OCI-LY7 (cell line): ENCODE measurements at regions of chr2 and their contacts with region 1.

Region 1: DNA sequence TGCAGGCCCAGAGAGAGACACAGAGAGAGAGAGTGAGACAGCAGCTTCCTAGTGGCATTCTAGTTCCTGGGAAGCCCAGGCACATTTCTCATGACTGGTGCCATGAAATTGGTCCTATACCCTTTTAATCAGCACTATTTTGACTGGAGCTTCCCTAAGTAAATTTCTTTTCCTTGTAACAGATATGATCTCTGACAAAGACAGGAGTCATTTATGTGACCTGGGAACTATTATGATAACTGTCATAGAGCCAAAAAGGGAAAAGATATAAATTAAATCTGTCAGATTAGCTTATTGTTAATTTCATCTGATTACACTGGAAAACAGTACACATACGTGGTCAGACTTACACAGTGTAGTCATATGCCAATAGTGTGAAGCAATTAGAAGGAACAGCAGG is 161.3 kb upstream of the HNRNPA3 start:
- DNase-seq: no peak
- H3K4me3 ChIP-seq: no peak overlapping the region
- H3K27ac ChIP-seq: no peak overlapping the region
- H3K4me1 ChIP-seq: no peaks in the 10 kb centered on the region
- CTCF ChIP-seq: no peak

Region 2: GRCh38 chr2:176601066-176601465 is 450.2 kb before region 1 on chr2:
- CTCF ChIA-PET with region 1: interaction called, 14 read pairs
- POLR2A ChIA-PET with region 1: no interaction called
- intact Hi-C with region 1: no loop called
- DNase-seq: no peak
- H3K4me3 ChIP-seq: no peak overlapping the region
- H3K27ac ChIP-seq: no peak overlapping the region
- H3K4me1 ChIP-seq: no peaks in the 10 kb centered on the region
- CTCF ChIP-seq: no peak

Region 3: DNA sequence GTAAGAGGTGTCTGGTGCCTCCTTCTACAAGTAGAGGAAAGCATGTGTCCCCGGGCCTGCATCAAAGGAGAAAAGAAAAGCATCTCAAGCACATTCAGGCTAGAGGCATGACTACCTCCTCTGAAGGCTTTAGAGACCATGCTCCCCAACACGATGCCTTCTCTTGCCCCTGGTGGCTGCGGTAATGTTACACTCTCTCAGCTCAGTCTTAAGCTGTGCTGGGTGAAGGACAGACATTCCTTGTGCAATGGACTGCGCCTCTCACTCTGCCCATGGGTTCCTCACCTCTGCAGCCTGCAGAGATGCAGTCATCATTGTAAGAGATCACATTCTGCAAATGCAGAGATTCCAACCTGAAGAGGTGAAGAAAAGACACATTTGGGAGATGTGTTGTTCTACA is 13.1 kb after region 1 on chr2:
- CTCF ChIA-PET with region 1: no interaction called
- POLR2A ChIA-PET with region 1: no interaction called
- intact Hi-C with region 1: no loop called
- DNase-seq: no peak
- H3K4me3 ChIP-seq: no peak overlapping the region
- H3K27ac ChIP-seq: no peak overlapping the region
- H3K4me1 ChIP-seq: no peaks in the 10 kb centered on the region
- CTCF ChIP-seq: no peak